ENCODE measurements at regions of chr1 and their contacts with region 1.

Region 1: GRCh38 chr1:44423591-44424537 is 18.8 kb downstream of the RNF220 start:
- DNase-seq: peak in 4 of 5 donors; percentile 63 to 75 (median 70)
- ATAC-seq: peak; percentile 85 to 96 (median 92)
- H3K4me3 ChIP-seq: peak overlapping the region in 3 of 12 donors; percentile 11 to 17 (median 13)
- H3K27ac ChIP-seq: peak overlapping the region in 10 of 12 donors; percentile 3 to 58 (median 30)
- H3K4me1 ChIP-seq: peaks cover 0 to 38% (median 27%) of the 10 kb centered on the region in 12 donors
- H3K27me3 ChIP-seq: peaks cover 6 to 49% (median 30%) of the 10 kb centered on the region in 9 donors
- CTCF ChIP-seq: no peak
- POLR2A ChIP-seq: no peak

Region 2: GRCh38 chr1:44405041-44405797 is 18.6 kb before region 1 on chr1 and contains the start of gene RNF220:
- intact Hi-C with region 1: loop called in 1 of 10 experiments (anchors 2 kb)
- DNase-seq: peak; percentile 55 to 74 (median 60)
- ATAC-seq: peak; percentile 82 to 84 (median 83)
- H3K4me3 ChIP-seq: peak within 1 kb of the TSS; percentile 24 to 66 (median 54)
- H3K27ac ChIP-seq: peak within 1 kb of the TSS in 7 of 12 donors; percentile 18 to 71 (median 46)
- H3K4me1 ChIP-seq: peaks cover 10 to 52% (median 27%) of the 10 kb centered on the region in 12 donors
- H3K27me3 ChIP-seq: peaks cover 35 to 94% (median 75%) of the 10 kb centered on the region in 9 donors
- CTCF ChIP-seq: peak in 4 of 12 donors; percentile 10 to 27 (median 16)
- POLR2A ChIP-seq: no peak
- total RNA-seq, gene RNF220: 55.5 to 108 (median 62.4) TPM

Region 3: DNA sequence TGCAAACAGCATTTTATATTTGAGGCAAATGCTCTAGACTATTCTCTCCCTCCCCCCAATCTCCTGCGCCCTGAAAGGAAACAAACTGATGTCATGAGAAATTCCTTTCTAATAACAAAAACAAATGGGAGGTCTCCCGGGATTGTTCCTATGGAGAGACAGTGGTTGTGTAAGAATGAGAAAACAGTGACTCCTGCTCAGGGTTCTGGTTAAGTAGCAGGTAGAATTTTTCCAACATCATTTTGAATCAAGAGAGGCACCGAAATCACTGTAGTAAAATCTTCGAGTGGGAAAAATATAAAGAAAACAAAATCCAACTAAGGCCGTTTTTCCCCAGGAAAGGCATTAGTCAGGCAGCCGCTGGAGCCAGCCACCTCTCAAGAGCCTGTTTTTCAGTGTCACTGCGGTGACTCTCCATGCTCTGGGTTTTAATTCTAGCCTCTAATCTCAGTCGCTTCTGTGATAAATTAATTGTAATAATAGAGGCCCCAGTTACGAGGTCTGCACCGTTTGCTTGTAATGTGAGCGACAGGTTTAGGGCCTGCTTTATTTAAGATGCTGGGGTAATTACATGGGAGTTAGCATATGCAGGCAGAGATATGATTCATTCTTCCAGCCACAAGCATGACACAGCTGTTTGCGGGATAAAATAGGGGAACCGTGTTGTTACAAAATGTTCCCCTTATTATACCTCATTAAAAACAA is 61.5 kb after region 1 on chr1:
- intact Hi-C with region 1: loop called in 2 of 10 experiments (anchors 10 kb)
- DNase-seq: peak in 1 of 5 donors; percentile 38
- ATAC-seq: peak; percentile 54 to 90 (median 80)
- H3K4me3 ChIP-seq: peak overlapping the region in 1 of 12 donors; percentile 10
- H3K27ac ChIP-seq: peak overlapping the region in 11 of 12 donors; percentile 22 to 79 (median 69)
- H3K4me1 ChIP-seq: peaks cover 7 to 32% (median 21%) of the 10 kb centered on the region in 12 donors
- H3K27me3 ChIP-seq: no peaks in the 10 kb centered on the region
- CTCF ChIP-seq: no peak
- POLR2A ChIP-seq: no peak